ENCODE measurements at regions of chr15 and their contacts with region 1.

Region 1: DNA sequence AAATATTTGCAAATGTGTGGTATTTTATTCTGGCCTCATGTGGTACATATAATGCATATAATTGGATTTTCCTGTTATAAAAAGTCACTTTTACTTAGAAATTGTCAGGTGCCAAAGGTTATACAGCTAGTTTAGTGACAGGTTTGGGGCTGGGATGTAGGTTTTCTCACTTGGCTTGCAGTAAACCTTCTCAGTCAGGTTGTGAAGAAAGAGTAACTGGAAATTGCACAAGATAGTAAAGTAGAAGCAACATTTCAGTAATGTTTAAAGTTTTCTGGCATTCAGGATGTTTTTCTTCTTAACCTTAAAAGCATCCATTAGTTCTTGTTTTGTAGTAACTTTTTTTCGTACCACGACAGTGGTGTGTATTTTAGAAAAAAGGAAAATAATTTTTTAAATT is 53.9 kb downstream of the MEF2A start:
- DNase-seq: no peak

Region 2: DNA sequence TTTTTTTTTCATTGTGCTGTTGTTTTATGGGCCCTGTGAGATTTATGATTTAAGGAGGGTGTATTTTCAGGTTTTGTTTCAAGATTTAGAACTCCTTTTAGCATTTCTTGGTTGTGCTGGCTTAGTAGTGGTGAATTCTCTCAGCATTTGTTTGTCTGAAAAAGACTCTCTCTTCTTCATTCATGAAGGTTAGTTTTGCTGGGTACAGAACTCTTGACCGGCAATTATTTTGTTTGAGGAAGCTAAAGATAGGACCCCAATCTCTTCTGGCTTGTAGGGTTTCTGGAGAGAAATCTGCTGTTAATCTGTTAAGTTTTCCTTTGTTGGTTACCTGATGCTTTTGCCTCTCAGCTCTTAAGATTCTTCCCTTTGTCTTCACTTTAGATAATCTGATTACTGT is 66.6 kb after region 1 on chr15:
- intact Hi-C with region 1: loop called in 1 of 2 experiments (anchors 2 kb)
- DNase-seq: no peak